HCT116 (cell line): ENCODE measurements at regions of chr1 and their contacts with region 1.

Region 1: GRCh38 chr1:177413982-177414596 is 243.3 kb downstream of the BRINP2 start:
- DNase-seq: no peak
- ATAC-seq: no peak
- H3K4me3 ChIP-seq: no peak overlapping the region
- H3K27ac ChIP-seq: no peak overlapping the region
- H3K4me1 ChIP-seq: no peaks in the 10 kb centered on the region
- H3K27me3 ChIP-seq: peaks cover 24% of the 10 kb centered on the region; the same call in 1 of the 2 replicates
- CTCF ChIP-seq: no peak
- POLR2A ChIP-seq: no peak
- RAD21 ChIP-seq: no peak

Region 2: DNA sequence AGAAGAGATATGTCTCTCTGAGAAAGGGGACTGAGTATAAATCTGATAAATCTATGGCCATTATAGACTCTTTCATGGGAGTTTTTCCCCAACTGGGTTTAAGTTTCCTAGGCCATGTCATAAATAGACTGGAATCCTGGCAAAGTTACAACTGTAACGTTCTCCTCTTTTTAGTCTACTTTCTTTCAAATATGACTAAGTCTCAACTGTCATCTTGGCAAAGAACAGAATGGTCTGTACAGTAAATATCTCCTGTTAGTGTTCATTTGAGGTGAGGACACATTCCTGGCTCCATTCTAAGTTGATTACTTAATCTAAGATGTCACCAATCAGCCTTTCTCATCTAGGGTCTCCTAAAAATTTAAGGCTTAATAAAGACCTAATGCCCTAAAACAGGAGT is 57.2 kb after region 1 on chr1:
- CTCF ChIA-PET with region 1: no interaction called
- POLR2A ChIA-PET with region 1: no interaction called
- RAD21 ChIA-PET with region 1: no interaction called
- intact Hi-C with region 1: loop called (anchors 1 kb)
- DNase-seq: no peak
- ATAC-seq: no peak
- H3K4me3 ChIP-seq: no peak overlapping the region
- H3K27ac ChIP-seq: no peak overlapping the region
- H3K4me1 ChIP-seq: no peaks in the 10 kb centered on the region
- H3K27me3 ChIP-seq: 0 out of 2 replicates have a peak, but pooled peaks cover 4% of the 10 kb centered on the region
- CTCF ChIP-seq: no peak
- POLR2A ChIP-seq: no peak
- RAD21 ChIP-seq: no peak

Region 3: DNA sequence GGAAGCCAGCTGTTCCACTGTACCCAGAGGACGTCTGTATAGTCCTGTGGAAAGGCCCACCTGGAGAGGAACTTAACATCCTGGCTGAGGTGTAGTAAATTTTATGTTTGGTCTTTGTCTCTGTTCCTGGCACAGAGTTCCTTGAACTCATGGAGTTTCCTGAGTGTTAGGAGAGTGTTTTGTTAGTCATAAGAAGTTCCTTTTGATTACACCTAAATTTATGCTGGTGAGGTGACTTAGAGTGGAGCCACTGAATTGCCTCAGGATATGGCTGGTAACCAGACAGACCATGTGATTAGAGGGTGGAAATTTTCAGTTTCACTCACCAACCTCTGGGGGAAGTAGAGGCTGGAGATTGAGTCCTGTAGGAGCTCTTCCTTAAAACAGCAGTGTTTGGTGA is 737.7 kb after region 1 on chr1:
- CTCF ChIA-PET with region 1: no interaction called
- POLR2A ChIA-PET with region 1: no interaction called
- RAD21 ChIA-PET with region 1: no interaction called
- intact Hi-C with region 1: no loop called
- DNase-seq: no peak
- ATAC-seq: no peak
- H3K4me3 ChIP-seq: no peak overlapping the region
- H3K27ac ChIP-seq: no peak overlapping the region
- H3K4me1 ChIP-seq: no peaks in the 10 kb centered on the region
- H3K27me3 ChIP-seq: no peaks in the 10 kb centered on the region
- CTCF ChIP-seq: no peak
- POLR2A ChIP-seq: no peak
- RAD21 ChIP-seq: no peak